ENCODE measurements at regions of chr2 and their contacts with region 1.

Region 1: GRCh38 chr2:30072250-30072842 is 74.5 kb upstream of the YPEL5 start:
- ATAC-seq: peak; percentile 90 to 100 (median 98)
- H3K4me3 ChIP-seq: no peak overlapping the region
- H3K27ac ChIP-seq: no peak overlapping the region
- H3K4me1 ChIP-seq: no peaks in the 10 kb centered on the region

Region 2: GRCh38 chr2:29480426-29480825 is 591.9 kb before region 1 on chr2:
- in situ Hi-C with region 1: loop called in 1 of 9 experiments (anchors 25 kb)
- ATAC-seq: peak in 5 of 8 experiments; percentile 33 to 82 (median 75)
- H3K4me3 ChIP-seq: no peak overlapping the region
- H3K27ac ChIP-seq: no peak overlapping the region
- H3K4me1 ChIP-seq: peaks cover 14 to 36% of the 10 kb centered on the region in 2 donors

Region 3: DNA sequence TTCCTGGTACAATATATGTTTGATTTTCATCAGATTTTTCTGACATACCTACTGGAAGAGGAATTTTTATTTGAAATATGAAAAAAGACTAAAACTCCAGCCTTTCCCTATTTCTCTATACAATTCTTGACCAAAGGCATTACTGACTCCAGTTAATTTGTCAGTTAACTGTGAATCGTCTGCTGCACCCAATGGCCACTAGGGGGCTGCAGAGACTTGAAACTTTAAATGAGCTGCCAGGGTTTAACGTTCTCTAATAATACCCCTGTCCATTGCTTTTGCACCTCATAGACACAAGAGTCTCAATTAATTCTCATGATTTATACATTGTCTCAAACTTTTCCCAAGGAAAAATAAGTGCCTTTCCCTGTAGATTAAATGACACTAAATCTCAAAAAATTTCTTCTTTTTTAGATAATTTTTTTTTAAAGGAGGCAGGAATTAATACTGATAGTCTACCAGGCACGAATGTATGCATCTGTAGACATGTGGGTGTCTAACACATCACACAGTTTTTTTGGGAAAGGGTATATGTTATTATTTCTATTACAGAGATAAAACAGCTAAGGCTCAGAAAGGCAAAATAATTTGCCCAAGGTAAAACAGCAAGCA is 149.1 kb before region 1 on chr2:
- in situ Hi-C with region 1: loop called in 1 of 9 experiments (anchors 10 kb)
- ATAC-seq: peak in 1 of 8 experiments; percentile 3
- H3K4me3 ChIP-seq: no peak overlapping the region
- H3K27ac ChIP-seq: no peak overlapping the region
- H3K4me1 ChIP-seq: peaks cover 8 to 14% of the 10 kb centered on the region in 2 donors

Measured in motor neuron (in vitro differentiated cells).